IMR-90 (cell line): ENCODE measurements at regions of chr6 and their contacts with region 1.

Region 1: DNA sequence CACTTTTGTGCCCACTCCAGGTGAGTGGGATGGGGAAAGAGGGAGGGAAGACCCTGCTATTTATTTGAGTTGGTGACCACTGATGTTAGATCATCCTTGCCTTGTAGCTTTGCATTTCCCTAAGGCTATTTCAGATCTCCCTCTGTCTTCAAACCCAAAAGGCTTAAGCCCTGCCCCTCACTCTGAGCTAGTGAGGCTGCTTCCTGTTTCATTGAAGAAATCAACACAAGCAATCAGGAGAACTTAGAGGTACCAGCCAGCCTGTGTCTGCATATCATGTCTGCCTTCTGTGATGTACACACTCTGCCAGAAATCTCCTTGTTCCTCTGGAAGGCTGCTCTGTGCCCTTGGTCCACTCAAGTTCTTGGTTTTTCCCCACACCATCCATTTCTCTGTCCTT is 135.3 kb downstream of the ARID1B start:
- DNase-seq: no peak
- ATAC-seq: no peak
- H3K4me3 ChIP-seq: no peak overlapping the region
- H3K27ac ChIP-seq: no peak overlapping the region
- H3K4me1 ChIP-seq: peaks cover 10% of the 10 kb centered on the region
- H3K27me3 ChIP-seq: no peaks in the 10 kb centered on the region
- CTCF ChIP-seq: no peak
- POLR2A ChIP-seq: no peak
- RAD21 ChIP-seq: no peak

Region 2: DNA sequence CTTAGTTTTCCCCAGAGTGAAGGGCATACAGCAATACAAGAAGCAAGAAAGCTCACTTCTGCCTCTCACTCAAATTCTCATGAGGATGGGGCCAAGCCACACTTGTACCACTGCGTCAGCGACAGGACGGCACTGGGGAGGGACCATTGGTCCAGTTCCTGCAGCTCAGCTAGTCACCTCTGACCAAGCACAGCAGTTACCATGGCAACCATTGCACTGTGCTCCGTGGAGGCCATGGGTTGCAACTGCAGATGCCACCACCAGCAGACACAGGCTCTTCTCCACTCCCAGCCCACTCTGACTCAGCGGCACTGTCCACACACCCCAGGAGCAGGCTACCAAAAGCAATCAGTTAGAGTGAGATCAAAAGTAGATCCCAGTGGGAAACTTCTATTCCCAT is 576.3 kb before region 1 on chr6:
- CTCF ChIA-PET with region 1: no interaction called
- POLR2A ChIA-PET with region 1: no interaction called
- dilution Hi-C with region 1: no loop called
- in situ Hi-C with region 1: no loop called
- intact Hi-C with region 1: no loop called
- DNase-seq: no peak
- ATAC-seq: peak; percentile 48; the same call in 1 of the 2 replicates
- H3K4me3 ChIP-seq: no peak overlapping the region
- H3K27ac ChIP-seq: no peak overlapping the region
- H3K4me1 ChIP-seq: no peaks in the 10 kb centered on the region
- H3K27me3 ChIP-seq: peaks cover 10% of the 10 kb centered on the region
- CTCF ChIP-seq: no peak
- POLR2A ChIP-seq: no peak
- RAD21 ChIP-seq: no peak

Region 3: GRCh38 chr6:156840606-156841005 is 71.8 kb before region 1 on chr6:
- CTCF ChIA-PET with region 1: no interaction called
- POLR2A ChIA-PET with region 1: interaction called, 17 read pairs
- dilution Hi-C with region 1: no loop called
- in situ Hi-C with region 1: no loop called
- intact Hi-C with region 1: no loop called
- DNase-seq: no peak
- ATAC-seq: no peak
- H3K4me3 ChIP-seq: no peak overlapping the region
- H3K27ac ChIP-seq: no peak overlapping the region
- H3K4me1 ChIP-seq: peaks cover 17% of the 10 kb centered on the region
- H3K27me3 ChIP-seq: no peaks in the 10 kb centered on the region
- CTCF ChIP-seq: no peak
- POLR2A ChIP-seq: no peak
- RAD21 ChIP-seq: no peak

Region 4: GRCh38 chr6:157274471-157275226 is 362.2 kb after region 1 on chr6:
- CTCF ChIA-PET with region 1: no interaction called
- POLR2A ChIA-PET with region 1: no interaction called
- dilution Hi-C with region 1: no loop called
- in situ Hi-C with region 1: no loop called
- intact Hi-C with region 1: no loop called
- DNase-seq: peak; percentile 57
- ATAC-seq: peak; percentile 99
- H3K4me3 ChIP-seq: peak overlapping the region; percentile 90
- H3K27ac ChIP-seq: peak overlapping the region; percentile 79
- H3K4me1 ChIP-seq: peaks cover 3% of the 10 kb centered on the region
- H3K27me3 ChIP-seq: no peaks in the 10 kb centered on the region
- CTCF ChIP-seq: peak; percentile 85
- POLR2A ChIP-seq: peak; percentile 67
- RAD21 ChIP-seq: peak; percentile 78